IMR-90 (cell line): ENCODE measurements at regions of chr1 and their contacts with region 1.

Region 1: GRCh38 chr1:3624200-3625136 is at the start of gene TPRG1L:
- DNase-seq: peak; percentile 90
- ATAC-seq: peak; percentile 98
- H3K4me3 ChIP-seq: peak within 1 kb of the TSS; percentile 99
- H3K27ac ChIP-seq: peak within 1 kb of the TSS; percentile 84
- H3K4me1 ChIP-seq: peaks cover 7% of the 10 kb centered on the region
- H3K27me3 ChIP-seq: no peaks in the 10 kb centered on the region
- CTCF ChIP-seq: no peak
- POLR2A ChIP-seq: no peak
- RAD21 ChIP-seq: no peak
- total RNA-seq, gene TPRG1L: 25.3 and 25.6 TPM in 2 replicates

Region 2: DNA sequence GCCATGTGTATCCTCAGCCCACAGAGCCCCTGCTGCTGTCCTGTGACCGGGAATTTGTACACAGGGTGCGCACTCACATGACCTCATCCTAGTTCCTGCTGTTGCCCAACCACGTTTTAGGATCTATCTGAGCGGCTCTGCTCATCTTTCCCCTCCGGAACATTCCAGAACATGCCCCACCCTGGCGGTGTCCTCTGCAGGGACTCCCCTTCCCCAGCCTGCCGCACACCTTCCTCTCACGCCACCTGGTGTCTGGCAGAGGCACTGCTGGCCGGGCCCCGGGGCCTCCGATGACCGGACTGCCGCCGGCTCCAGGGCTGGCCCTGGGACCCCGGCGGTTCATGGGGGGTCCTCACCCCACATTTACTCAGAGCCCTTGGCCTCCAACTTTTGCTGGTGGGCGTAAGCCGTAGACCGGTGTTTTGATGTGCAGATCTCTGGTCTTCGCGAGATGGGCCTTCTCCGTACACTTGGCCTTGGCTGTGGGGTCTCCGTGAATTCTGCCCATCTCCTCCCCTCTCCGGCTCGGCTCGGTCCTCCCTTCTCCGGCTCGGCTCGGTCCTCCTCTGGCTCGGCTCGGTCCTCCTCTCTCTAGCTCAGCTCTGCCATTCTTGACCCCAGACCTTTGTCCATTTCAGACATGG is 140.5 kb before region 1 on chr1:
- CTCF ChIA-PET with region 1: interaction called, 8 read pairs
- POLR2A ChIA-PET with region 1: no interaction called
- dilution Hi-C with region 1: no loop called
- in situ Hi-C with region 1: loop called (anchors 5 kb)
- intact Hi-C with region 1: no loop called
- DNase-seq: no peak
- ATAC-seq: peak; percentile 79
- H3K4me3 ChIP-seq: no peak overlapping the region
- H3K27ac ChIP-seq: no peak overlapping the region
- H3K4me1 ChIP-seq: no peaks in the 10 kb centered on the region
- H3K27me3 ChIP-seq: peaks cover 2% of the 10 kb centered on the region; the same call in 1 of the 2 replicates
- CTCF ChIP-seq: peak; percentile 66
- POLR2A ChIP-seq: no peak
- RAD21 ChIP-seq: peak; percentile 60